PC-3 (cell line): ENCODE measurements at regions of chr3 and their contacts with region 1.

Region 1: DNA sequence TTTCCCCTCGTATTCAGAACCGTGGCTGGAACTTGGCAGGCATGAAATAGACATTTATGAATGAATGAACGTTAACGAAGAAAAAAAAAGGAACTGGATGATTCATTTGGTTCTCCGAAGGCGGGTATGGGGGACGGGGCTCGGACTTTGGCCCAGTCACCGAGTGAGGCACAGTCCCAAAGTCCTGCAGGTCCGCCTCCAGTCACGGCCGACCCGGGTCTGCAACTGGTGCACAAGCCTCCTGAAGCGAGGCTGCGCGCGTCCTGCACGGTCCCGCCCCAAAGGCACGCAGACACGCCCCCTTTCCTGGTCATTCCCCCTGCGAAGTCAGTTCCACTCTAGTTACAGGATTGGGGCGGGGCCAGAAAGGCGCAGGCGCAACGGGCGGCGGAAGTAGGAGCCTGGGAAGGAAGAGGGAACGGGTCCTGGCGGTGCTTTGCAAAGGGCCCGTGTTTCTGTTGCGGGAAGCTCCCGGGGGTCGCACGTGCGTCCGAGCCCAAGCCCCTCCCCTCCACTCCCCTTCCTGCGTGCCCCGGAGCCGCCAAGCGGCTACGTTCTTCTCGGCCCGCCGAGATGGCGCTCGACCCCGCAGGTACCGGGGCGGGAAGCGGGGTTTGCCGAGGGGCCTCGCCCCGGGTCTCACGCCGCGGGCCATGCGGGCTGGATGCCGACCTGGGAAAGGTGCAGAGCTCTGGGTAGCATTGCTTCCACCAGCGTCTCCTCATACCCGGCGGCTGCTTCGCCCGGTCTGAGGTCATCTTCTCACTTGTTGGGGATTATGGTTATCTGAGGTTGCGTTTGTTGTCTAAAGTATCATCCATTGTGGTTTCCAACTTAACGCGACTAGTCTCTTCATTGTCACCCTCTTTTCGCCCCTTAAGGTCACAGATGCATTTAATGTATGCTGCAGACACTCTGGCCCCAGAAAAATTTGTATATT is at the start of gene CMC1:
- DNase-seq: peak; percentile 98
- ATAC-seq: peak; percentile 99
- H3K4me3 ChIP-seq: peak within 1 kb of the TSS; percentile 84
- H3K27ac ChIP-seq: peak within 1 kb of the TSS; percentile 59
- H3K4me1 ChIP-seq: peaks cover 22% of the 10 kb centered on the region
- H3K27me3 ChIP-seq: no peaks in the 10 kb centered on the region
- CTCF ChIP-seq: no peak
- total RNA-seq, gene CMC1: 11.3 and 16.7 TPM in 2 replicates

Region 2: DNA sequence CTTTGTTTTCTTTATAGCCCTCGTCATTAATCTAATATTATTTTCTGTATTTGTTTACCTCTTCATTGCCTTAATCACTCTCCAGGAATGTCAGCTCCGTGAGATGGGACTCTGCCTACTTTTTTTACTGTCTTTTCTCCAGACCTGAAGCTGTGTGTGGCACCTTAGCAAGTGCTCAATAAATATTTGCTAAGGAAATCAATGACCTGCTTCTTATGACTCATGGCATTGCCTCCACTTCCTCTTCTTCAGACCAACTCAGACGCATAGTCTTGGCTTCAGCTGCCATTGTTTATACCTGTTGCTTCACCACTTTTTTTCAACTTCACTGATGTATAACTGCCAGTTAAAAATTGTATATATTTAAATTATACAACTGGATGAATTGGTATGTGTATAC is 218.6 kb before region 1 on chr3:
- CTCF ChIA-PET with region 1: no interaction called
- POLR2A ChIA-PET with region 1: no interaction called
- intact Hi-C with region 1: loop called (anchors 1 kb)
- DNase-seq: peak; percentile 93
- ATAC-seq: peak; percentile 83
- H3K4me3 ChIP-seq: no peak overlapping the region
- H3K27ac ChIP-seq: peak overlapping the region; percentile 73
- H3K4me1 ChIP-seq: peaks cover 22% of the 10 kb centered on the region
- H3K27me3 ChIP-seq: no peaks in the 10 kb centered on the region
- CTCF ChIP-seq: no peak

Region 3: DNA sequence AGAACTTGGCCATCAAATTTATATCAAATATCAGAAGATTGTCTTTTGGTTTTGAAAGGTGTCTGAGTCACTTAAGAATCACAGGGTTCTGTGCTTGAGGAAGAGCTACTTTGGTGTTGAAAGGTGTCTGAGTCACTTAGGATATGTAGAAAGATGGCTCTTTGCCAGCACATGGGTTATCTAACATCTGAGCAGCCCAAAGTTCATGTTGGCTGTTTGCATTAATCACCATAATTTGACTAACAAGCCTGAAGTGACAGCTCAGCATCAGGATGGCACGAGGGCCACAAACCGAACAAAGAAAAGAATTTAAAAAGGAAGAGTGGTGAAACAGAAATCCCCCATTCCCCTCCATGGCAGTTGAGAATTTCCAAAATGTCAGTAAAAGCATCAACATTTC is 190.6 kb before region 1 on chr3:
- CTCF ChIA-PET with region 1: no interaction called
- POLR2A ChIA-PET with region 1: no interaction called
- intact Hi-C with region 1: loop called (anchors 1 kb)
- DNase-seq: peak; percentile 97
- ATAC-seq: peak; percentile 69
- H3K4me3 ChIP-seq: no peak overlapping the region
- H3K27ac ChIP-seq: peak overlapping the region; percentile 58
- H3K4me1 ChIP-seq: peaks cover 55% of the 10 kb centered on the region
- H3K27me3 ChIP-seq: no peaks in the 10 kb centered on the region
- CTCF ChIP-seq: no peak

Region 4: DNA sequence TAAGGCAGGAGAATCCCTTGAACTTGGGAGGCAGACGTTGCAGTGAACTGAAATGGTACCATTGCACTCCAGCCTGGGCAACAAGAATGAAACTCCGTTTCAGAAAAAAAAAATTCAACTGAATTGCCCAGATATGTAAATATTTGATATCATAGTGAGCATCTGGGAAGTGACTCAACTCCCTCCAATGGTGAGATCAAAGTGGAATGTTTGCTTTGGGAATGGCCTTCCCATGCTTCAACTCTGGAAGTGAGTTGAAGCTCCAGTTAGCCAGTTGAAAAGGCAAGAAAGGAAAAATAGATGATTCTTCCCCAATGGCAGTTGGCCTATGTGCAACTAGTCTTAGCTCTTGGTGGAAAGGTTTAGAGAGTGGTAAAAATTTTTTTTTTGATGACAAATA is 131.7 kb before region 1 on chr3:
- CTCF ChIA-PET with region 1: no interaction called
- POLR2A ChIA-PET with region 1: no interaction called
- intact Hi-C with region 1: no loop called
- DNase-seq: peak; percentile 90
- ATAC-seq: peak; percentile 95
- H3K4me3 ChIP-seq: no peak overlapping the region
- H3K27ac ChIP-seq: peak overlapping the region; percentile 32; the same call in 1 of the 2 replicates
- H3K4me1 ChIP-seq: peaks cover 6% of the 10 kb centered on the region; the same call in 1 of the 2 replicates
- H3K27me3 ChIP-seq: no peaks in the 10 kb centered on the region
- CTCF ChIP-seq: no peak

Region 5: GRCh38 chr3:28348629-28349483 is 107.4 kb after region 1 on chr3 and contains the starts of genes AZI2 and ZCWPW2:
- CTCF ChIA-PET with region 1: no interaction called
- POLR2A ChIA-PET with region 1: no interaction called
- intact Hi-C with region 1: loop called (anchors 1 kb)
- DNase-seq: peak; percentile 95
- ATAC-seq: peak; percentile 90
- H3K4me3 ChIP-seq: peak within 1 kb of the TSS; percentile 85
- H3K27ac ChIP-seq: peak within 1 kb of the TSS; percentile 84
- H3K4me1 ChIP-seq: peaks cover 34% of the 10 kb centered on the region
- H3K27me3 ChIP-seq: no peaks in the 10 kb centered on the region
- CTCF ChIP-seq: peak; percentile 33; the same call in 1 of the 2 replicates
- total RNA-seq, gene AZI2: 36.3 and 40.4 TPM in 2 replicates
- total RNA-seq, gene ZCWPW2: not detected in 2 replicates